PC-3 (cell line): ENCODE measurements at regions of chr1 and their contacts with region 1.

Region 1: DNA sequence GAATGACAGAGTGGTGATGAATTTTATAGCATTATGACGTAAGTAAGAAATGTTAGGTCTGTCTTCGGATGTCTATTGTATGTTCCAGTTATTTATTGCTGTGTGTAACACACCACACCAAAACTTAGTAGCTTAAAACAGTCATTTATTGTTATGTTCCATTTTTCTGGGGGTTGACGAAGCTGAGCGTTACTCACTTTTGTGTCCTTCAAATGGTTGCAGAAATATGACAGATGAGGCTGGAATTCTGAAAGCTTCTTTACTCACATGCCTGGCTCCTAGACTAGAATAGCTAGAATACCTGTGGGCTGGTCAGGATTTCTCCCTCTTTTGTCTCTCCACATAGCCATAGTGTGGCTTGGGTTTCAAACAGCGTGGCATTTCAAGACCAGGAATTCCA is 62.1 kb upstream of the S1PR1 start:
- DNase-seq: peak; percentile 92
- ATAC-seq: peak; percentile 92
- H3K4me3 ChIP-seq: 0 out of 2 replicates have a peak overlapping the region, but pooled peaks have one; percentile 12
- H3K27ac ChIP-seq: peak overlapping the region; percentile 71
- H3K4me1 ChIP-seq: peaks cover 16% of the 10 kb centered on the region
- H3K27me3 ChIP-seq: no peaks in the 10 kb centered on the region
- CTCF ChIP-seq: no peak

Region 2: GRCh38 chr1:100943533-100943932 is 231.2 kb before region 1 on chr1:
- CTCF ChIA-PET with region 1: no interaction called
- POLR2A ChIA-PET with region 1: interaction called, 14 read pairs
- intact Hi-C with region 1: no loop called
- DNase-seq: no peak
- ATAC-seq: 0 out of 2 replicates have a peak, but pooled peaks have one; percentile 22
- H3K4me3 ChIP-seq: no peak overlapping the region
- H3K27ac ChIP-seq: no peak overlapping the region
- H3K4me1 ChIP-seq: 0 out of 2 replicates have a peak, but pooled peaks cover under 1% of the 10 kb centered on the region
- H3K27me3 ChIP-seq: no peaks in the 10 kb centered on the region
- CTCF ChIP-seq: no peak

Region 3: GRCh38 chr1:101203820-101204540 is 29.3 kb after region 1 on chr1:
- CTCF ChIA-PET with region 1: interaction called, 4 read pairs
- POLR2A ChIA-PET with region 1: interaction called, 10 read pairs
- intact Hi-C with region 1: no loop called
- DNase-seq: peak; percentile 5
- ATAC-seq: no peak
- H3K4me3 ChIP-seq: no peak overlapping the region
- H3K27ac ChIP-seq: no peak overlapping the region
- H3K4me1 ChIP-seq: peaks cover 5% of the 10 kb centered on the region; the same call in 1 of the 2 replicates
- H3K27me3 ChIP-seq: no peaks in the 10 kb centered on the region
- CTCF ChIP-seq: no peak

Region 4: GRCh38 chr1:101247404-101248287 is 72.9 kb after region 1 on chr1:
- CTCF ChIA-PET with region 1: no interaction called
- POLR2A ChIA-PET with region 1: no interaction called
- intact Hi-C with region 1: no loop called
- DNase-seq: no peak
- ATAC-seq: no peak
- H3K4me3 ChIP-seq: no peak overlapping the region
- H3K27ac ChIP-seq: no peak overlapping the region
- H3K4me1 ChIP-seq: no peaks in the 10 kb centered on the region
- H3K27me3 ChIP-seq: no peaks in the 10 kb centered on the region
- CTCF ChIP-seq: no peak

Region 5: GRCh38 chr1:101257500-101258325 is 83.0 kb after region 1 on chr1:
- CTCF ChIA-PET with region 1: no interaction called
- POLR2A ChIA-PET with region 1: no interaction called
- intact Hi-C with region 1: no loop called
- DNase-seq: peak; percentile 49
- ATAC-seq: no peak
- H3K4me3 ChIP-seq: no peak overlapping the region
- H3K27ac ChIP-seq: no peak overlapping the region
- H3K4me1 ChIP-seq: peaks cover 60% of the 10 kb centered on the region
- H3K27me3 ChIP-seq: no peaks in the 10 kb centered on the region
- CTCF ChIP-seq: no peak